Breast epithelium (tissue), 4 donors: ENCODE measurements at regions of chr6 and their contacts with region 1.

Region 1: GRCh38 chr6:34249552-34250261 is 901 bp upstream of the SMIM29 start:
- DNase-seq: no peak
- H3K4me3 ChIP-seq: peak overlapping the region; percentile 71 to 83 (median 71)
- H3K27ac ChIP-seq: peak overlapping the region; percentile 90 to 92
- H3K4me1 ChIP-seq: peaks cover 0 to 9% of the 10 kb centered on the region in 2 donors
- H3K27me3 ChIP-seq: no peaks in the 10 kb centered on the region
- CTCF ChIP-seq: no peak
- POLR2A ChIP-seq: no peak

Region 2: GRCh38 chr6:33914645-33915044 is 335.1 kb before region 1 on chr6:
- intact Hi-C with region 1: no loop called
- DNase-seq: no peak
- H3K4me3 ChIP-seq: no peak overlapping the region
- H3K27ac ChIP-seq: no peak overlapping the region
- H3K4me1 ChIP-seq: no peaks in the 10 kb centered on the region
- H3K27me3 ChIP-seq: no peaks in the 10 kb centered on the region
- CTCF ChIP-seq: no peak
- POLR2A ChIP-seq: no peak

Region 3: DNA sequence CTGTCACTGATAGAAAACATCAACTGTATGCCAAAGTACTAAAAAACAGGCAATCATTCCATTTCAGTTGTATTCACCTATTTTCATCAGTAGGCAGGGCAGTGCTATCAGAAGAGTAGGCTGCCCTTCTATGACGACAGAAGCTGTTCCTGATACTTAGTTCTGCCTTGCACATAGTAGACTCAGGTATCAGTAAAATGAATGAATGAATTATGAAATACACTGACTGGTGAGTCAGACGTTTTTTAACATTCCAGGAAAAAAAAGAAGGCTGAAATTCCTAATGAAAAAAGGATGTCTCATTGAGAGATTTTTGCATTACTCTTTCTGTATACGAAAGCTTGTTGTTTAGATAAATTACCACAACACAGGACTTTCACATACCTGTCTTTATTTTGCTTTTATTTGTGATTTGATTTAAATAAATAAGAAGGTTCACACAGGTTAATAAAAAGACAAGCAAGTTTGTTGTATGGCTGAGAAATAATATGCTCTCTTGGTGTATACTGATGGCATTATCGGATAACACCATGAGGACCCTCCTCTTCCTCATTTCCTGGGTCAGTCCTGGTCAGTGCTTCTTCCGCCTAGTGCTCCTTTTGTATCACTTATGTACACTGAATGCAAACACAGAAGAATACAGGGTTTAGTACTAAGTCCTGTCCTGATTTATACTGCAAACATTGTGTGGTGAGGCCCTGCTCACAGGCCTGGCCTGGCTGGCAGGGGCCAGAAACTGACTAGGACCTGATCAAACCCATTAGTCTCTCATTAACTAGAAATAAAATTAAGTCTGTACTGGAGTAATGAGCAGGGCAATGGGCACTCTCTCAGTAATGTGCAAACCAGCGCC is 345.9 kb after region 1 on chr6:
- intact Hi-C with region 1: loop called (anchors 5 kb)
- DNase-seq: no peak
- H3K4me3 ChIP-seq: no peak overlapping the region
- H3K27ac ChIP-seq: peak overlapping the region; percentile 8 to 16
- H3K4me1 ChIP-seq: peaks cover 0 to 36% of the 10 kb centered on the region in 2 donors
- H3K27me3 ChIP-seq: no peaks in the 10 kb centered on the region
- CTCF ChIP-seq: no peak
- POLR2A ChIP-seq: no peak

Region 4: DNA sequence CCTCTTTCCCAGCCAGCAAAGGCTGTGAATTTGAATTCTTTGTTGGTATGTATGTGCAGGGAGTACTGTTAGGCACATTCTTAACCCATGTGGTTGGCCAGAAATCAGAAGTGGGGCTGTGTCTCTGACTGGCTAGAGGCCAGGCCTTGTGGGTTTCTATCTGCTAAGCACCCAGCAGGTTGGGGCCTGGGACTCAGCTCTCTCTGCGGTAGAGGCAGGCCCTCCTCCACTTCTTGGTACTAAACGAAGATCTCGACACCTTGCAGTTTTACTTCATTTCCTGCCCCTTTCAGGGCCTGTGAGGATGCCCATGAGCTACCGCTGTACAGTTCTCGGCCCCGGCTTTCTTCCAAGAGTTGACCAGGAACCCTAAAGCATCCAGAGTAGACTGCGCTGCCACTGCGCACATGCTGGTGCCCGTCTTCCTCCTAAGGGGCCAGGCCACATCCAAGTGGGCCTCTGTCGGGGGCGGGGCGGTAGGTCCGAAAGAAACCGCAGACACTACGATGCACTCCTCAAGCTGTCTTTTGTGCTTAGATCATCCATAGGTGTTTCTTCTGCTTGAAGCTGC is 840.3 kb after region 1 on chr6:
- intact Hi-C with region 1: no loop called
- DNase-seq: peak in 1 of 2 donors; percentile 64
- H3K4me3 ChIP-seq: no peak overlapping the region
- H3K27ac ChIP-seq: peak overlapping the region; percentile 72 to 86
- H3K4me1 ChIP-seq: peaks cover 0 to 4% of the 10 kb centered on the region in 2 donors
- H3K27me3 ChIP-seq: no peaks in the 10 kb centered on the region
- CTCF ChIP-seq: no peak
- POLR2A ChIP-seq: no peak